RWPE1 (cell line): ENCODE measurements at regions of chr20 and their contacts with region 1.

Region 1: DNA sequence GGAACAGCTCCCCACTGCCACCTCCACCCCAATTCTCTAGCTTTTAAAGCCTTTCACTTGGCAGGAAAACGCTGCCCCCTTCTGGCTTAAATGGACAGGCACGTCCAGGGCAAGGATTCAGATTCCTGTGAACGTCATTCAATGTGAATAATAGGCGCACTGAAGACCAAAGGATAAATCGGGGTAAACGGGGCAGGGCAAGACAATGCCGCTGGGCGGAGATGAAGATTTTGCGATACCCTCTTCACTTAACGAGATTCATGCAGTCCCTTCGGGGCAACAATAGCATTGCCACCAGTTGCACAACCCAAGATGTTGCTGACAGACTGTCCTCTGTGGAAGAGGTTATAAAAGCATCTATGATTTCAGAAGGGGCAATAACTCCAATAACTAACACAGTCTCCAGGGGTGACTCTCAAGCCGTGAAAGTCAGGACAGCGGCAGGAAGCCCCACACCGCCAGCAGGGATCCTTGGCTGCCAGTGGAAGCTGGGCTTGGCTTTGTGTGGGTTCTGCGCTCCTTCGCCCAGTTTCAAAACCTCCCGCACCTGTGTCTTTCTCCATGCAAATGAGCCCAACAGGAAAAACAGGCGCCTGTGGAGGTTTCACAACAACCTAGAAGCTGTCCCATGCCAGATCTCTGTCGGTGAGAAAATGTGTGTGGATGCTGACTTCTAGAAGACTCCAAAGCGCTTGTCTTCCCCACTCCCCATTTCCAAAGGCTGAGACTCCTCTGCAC is 291.8 kb downstream of the BMP7 start:
- DNase-seq: peak; percentile 74
- H3K27ac ChIP-seq: no peak overlapping the region
- CTCF ChIP-seq: peak; percentile 80

Region 2: DNA sequence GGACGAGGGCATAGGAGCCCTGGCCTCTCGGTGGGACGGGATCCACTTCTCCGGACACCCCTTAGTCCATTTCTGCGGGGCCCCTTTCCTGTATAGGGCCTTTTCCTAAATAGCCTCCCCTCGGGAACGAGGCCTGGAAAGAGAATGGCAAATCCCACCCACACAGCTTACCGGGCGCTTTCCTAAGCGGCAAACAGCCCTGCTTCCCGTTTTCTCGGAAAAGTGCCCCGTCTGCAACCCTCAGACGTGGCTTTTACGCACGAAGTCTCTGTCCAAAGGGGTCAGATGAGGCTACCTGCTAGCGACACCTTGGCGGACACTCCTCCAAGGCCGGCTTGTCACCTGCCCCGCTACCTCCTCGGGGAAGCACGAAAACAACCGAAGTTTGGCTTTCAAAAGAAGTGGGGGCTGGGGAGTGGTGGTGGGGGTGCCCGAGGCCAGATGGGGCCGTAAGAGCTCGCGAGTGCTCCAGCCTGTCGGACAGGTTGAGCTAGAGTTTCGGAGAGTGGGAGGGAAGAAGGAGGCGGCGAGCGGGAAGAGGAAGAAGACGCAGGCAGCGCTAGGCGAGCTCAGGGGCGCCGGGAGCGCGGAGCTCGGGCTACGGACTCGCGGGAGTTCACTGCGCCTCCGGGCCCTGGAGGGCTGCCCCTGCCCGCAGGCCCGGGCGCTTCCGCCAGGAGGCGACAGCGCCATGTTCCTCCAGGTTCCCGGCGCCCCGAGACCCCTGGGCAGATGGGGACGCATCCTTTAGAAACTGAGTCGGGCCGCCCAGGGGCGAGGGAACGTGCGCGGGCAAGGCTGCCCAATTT is 344.8 kb before region 1 on chr20:
- CTCF ChIA-PET with region 1: interaction called, 18 read pairs
- POLR2A ChIA-PET with region 1: no interaction called
- DNase-seq: peak; percentile 97
- H3K27ac ChIP-seq: peak overlapping the region; percentile 70
- CTCF ChIP-seq: peak; percentile 97

Region 3: DNA sequence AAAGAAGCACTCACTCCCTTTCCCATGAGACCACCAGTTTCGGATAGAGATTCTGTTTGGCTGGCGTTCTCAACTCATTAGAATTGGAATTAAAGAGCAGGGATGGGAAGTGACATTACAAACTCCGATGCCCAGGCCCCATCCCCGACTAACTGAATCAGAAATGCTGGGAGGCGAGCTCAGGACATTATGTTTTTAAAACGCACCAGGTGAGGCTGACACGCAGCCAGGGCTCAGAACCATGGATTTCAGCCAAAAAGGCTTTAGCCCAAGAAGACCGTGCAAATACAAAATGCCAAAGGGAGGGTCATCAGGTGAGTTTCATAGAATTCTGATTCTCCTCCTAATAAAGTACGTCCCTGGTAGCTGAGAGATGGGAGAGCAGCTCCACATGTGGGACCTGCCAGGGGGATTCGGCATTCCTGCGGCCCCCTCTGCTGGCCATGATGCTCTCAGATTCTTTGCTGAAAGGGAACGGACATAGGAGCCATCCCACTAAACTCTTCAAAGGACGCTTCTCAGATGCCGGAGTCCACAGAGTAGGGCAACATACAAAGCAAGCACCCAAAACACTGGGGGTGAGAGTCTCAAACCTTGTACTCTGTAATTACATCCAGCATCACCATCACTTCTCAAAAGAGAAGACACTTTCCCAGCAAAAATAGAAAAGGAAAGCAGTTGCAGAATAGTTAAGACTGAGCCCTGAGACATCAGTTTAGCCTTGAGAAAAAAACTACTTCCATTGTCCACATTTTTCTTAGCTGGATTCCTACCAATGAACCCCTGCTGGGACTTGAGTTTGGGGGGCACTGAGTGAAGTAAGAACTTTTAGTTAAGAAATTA is 86.6 kb after region 1 on chr20:
- CTCF ChIA-PET with region 1: interaction called, 12 read pairs
- POLR2A ChIA-PET with region 1: no interaction called
- DNase-seq: peak; percentile 79
- H3K27ac ChIP-seq: peak overlapping the region; percentile 69
- CTCF ChIP-seq: no peak; the same call in 1 of the 2 replicates